Right ventricle myocardium inferior (tissue), 1 donor: ENCODE measurements at regions of chr2 and their contacts with region 1.

Region 1: GRCh38 chr2:222561817-222562645 is 93.9 kb downstream of the FARSB start:
- DNase-seq: no peak
- ATAC-seq: peak; percentile 63

Region 2: GRCh38 chr2:222424729-222425671 is 137.0 kb before region 1 on chr2:
- intact Hi-C with region 1: loop called (anchors 10 kb)
- DNase-seq: peak; percentile 60
- ATAC-seq: peak; percentile 60

Region 3: GRCh38 chr2:222594679-222595078 is 32.6 kb after region 1 on chr2:
- intact Hi-C with region 1: no loop called
- DNase-seq: no peak
- ATAC-seq: no peak